Naive thymus-derived CD4-positive, alpha-beta T cell (primary cell): ENCODE measurements at regions of chr6 and their contacts with region 1.

Region 1: GRCh38 chr6:26223650-26224546 is 136.7 kb downstream of the HFE start:
- DNase-seq: peak in 7 of 9 donors; percentile 79 to 89 (median 84)
- ATAC-seq: peak; percentile 93
- H3K4me3 ChIP-seq: peak overlapping the region; percentile 77
- H3K4me3 Mint-ChIP-seq: no peak overlapping the region
- H3K27ac ChIP-seq: peak overlapping the region; percentile 77
- H3K27ac Mint-ChIP-seq: no peak overlapping the region
- H3K4me1 ChIP-seq: peaks cover 14 to 18% of the 10 kb centered on the region in 2 donors
- H3K4me1 Mint-ChIP-seq: peaks cover 10 to 25% (median 18%) of the 10 kb centered on the region in 7 donors
- H3K27me3 ChIP-seq: no peaks in the 10 kb centered on the region
- H3K27me3 Mint-ChIP-seq: no peaks in the 10 kb centered on the region

Region 2: GRCh38 chr6:26264547-26264946 is 40.6 kb after region 1 on chr6:
- CTCF ChIA-PET with region 1: no interaction called
- POLR2A ChIA-PET with region 1: interaction called, 459 read pairs
- intact Hi-C with region 1: no loop called
- DNase-seq: no peak
- ATAC-seq: no peak
- H3K4me3 ChIP-seq: no peak overlapping the region
- H3K4me3 Mint-ChIP-seq: no peak overlapping the region
- H3K27ac ChIP-seq: no peak overlapping the region
- H3K27ac Mint-ChIP-seq: no peak overlapping the region
- H3K4me1 ChIP-seq: no peaks in the 10 kb centered on the region
- H3K4me1 Mint-ChIP-seq: peaks cover 0 to 7% (median 0%) of the 10 kb centered on the region in 7 donors
- H3K27me3 ChIP-seq: no peaks in the 10 kb centered on the region
- H3K27me3 Mint-ChIP-seq: no peaks in the 10 kb centered on the region